Dendritic cell treated with granulocyte-macrophage colony-stimulating factor and Interleukin-4, amounts not matched to agents 40 ng/mL and 50 ng/mL, for 4 days (primary cell): ENCODE measurements at regions of chr2 and their contacts with region 1.

Region 1: GRCh38 chr2:182049372-182050148 is 63.9 kb downstream of the PPP1R1C start:
- H3K4me3 Mint-ChIP-seq: no peak overlapping the region
- H3K27ac Mint-ChIP-seq: no peak overlapping the region
- H3K4me1 Mint-ChIP-seq: no peaks in the 10 kb centered on the region
- H3K27me3 Mint-ChIP-seq: no peaks in the 10 kb centered on the region

Region 2: DNA sequence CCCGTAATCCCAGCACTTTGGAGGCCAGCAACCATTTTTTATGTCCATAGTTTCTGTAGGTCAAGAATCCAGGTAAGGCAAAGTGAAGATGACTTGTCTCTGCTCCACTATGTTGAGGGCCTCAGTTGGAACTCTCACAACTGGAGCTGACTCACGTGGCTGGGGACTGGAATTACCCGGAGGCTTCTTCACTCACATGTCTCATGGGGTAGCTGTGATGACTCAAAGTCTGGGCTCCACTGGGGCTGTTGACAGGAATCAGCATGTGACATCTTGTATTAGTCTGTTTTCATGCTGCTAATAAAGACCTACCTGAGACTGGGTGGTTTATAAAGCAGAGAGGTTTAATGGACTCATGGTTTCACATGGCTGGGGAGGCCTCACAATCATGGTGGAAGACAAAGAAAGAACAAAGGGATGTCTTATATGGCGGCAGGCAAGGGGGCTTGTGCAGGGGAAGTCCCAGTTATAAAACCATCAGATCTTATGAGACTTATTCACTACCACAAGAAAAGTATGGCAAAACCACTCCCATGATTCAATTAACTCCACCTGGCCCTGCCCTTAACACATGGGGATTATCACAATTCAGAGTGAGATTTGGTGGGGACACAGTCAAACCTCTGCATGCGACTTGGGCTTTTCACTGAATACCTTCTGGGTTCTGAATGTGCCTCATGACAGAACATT is 71.8 kb before region 1 on chr2:
- intact Hi-C with region 1: loop called (anchors 10 kb)
- H3K4me3 Mint-ChIP-seq: no peak overlapping the region
- H3K27ac Mint-ChIP-seq: no peak overlapping the region
- H3K4me1 Mint-ChIP-seq: no peaks in the 10 kb centered on the region
- H3K27me3 Mint-ChIP-seq: no peaks in the 10 kb centered on the region

Region 3: GRCh38 chr2:182280118-182280517 is 230.6 kb after region 1 on chr2:
- intact Hi-C with region 1: no loop called
- H3K4me3 Mint-ChIP-seq: no peak overlapping the region
- H3K27ac Mint-ChIP-seq: no peak overlapping the region
- H3K4me1 Mint-ChIP-seq: no peaks in the 10 kb centered on the region
- H3K27me3 Mint-ChIP-seq: no peaks in the 10 kb centered on the region